HepG2 (cell line): ENCODE measurements at regions of chr11 and their contacts with region 1.

Region 1: GRCh38 chr11:72483412-72484186 is 49.3 kb upstream of the CLPB start:
- DNase-seq: peak; percentile 23
- ATAC-seq: no peak
- H3K4me3 ChIP-seq: no peak overlapping the region
- H3K27ac ChIP-seq: no peak overlapping the region
- H3K4me1 ChIP-seq: peaks cover 10% of the 10 kb centered on the region; the same call in 1 of the 2 replicates
- H3K27me3 ChIP-seq: peaks cover 3 to 5% of the 10 kb centered on the region in 2 experiments; a peak in 2 of 5 replicates
- CTCF ChIP-seq: no peak
- EP300 ChIP-seq: no peak
- POLR2A ChIP-seq: no peak
- RAD21 ChIP-seq: no peak

Region 2: GRCh38 chr11:72468289-72468688 is 15.3 kb before region 1 on chr11:
- CTCF ChIA-PET with region 1: no interaction called
- POLR2A ChIA-PET with region 1: no interaction called
- in situ Hi-C with region 1: no loop called
- intact Hi-C with region 1: no loop called
- DNase-seq: no peak
- ATAC-seq: no peak
- H3K4me3 ChIP-seq: no peak overlapping the region
- H3K27ac ChIP-seq: no peak overlapping the region
- H3K4me1 ChIP-seq: no peaks in the 10 kb centered on the region; the same call in 1 of the 2 replicates
- H3K27me3 ChIP-seq: peaks cover 0 to 33% of the 10 kb centered on the region in 2 experiments; a peak in 3 of 5 replicates
- CTCF ChIP-seq: no peak
- EP300 ChIP-seq: no peak
- POLR2A ChIP-seq: no peak
- RAD21 ChIP-seq: no peak

Region 3: DNA sequence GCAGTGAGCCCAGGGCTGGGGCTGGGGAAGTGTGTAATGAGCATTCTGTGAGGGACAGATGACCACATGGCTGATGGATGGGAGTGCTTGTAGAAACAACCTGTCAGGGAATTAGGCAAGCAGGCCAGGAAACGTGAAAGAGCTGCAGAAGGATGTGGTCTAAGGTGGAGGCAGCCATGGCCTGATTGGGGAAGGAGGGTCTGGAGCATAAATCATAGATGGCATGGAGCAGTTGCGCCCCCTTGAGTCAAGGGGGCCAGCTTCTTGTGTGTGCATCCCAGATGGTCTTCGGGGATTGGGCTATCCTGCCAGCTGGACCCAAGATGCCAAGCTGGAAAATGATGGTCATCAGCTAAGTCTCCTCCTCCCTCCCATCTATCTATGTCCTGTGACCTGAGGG is 70.1 kb after region 1 on chr11:
- CTCF ChIA-PET with region 1: interaction called, 4 read pairs
- POLR2A ChIA-PET with region 1: no interaction called
- in situ Hi-C with region 1: no loop called
- intact Hi-C with region 1: loop called (anchors 5 kb)
- DNase-seq: no peak
- ATAC-seq: peak; percentile 57
- H3K4me3 ChIP-seq: no peak overlapping the region
- H3K27ac ChIP-seq: no peak overlapping the region
- H3K4me1 ChIP-seq: no peaks in the 10 kb centered on the region
- H3K27me3 ChIP-seq: peaks cover 0 to 16% of the 10 kb centered on the region in 2 experiments; a peak in 3 of 5 replicates
- CTCF ChIP-seq: peak; percentile 59
- EP300 ChIP-seq: no peak
- POLR2A ChIP-seq: no peak
- RAD21 ChIP-seq: no peak

Region 4: GRCh38 chr11:72573072-72573854 is 89.7 kb after region 1 on chr11:
- CTCF ChIA-PET with region 1: interaction called, 22 read pairs
- POLR2A ChIA-PET with region 1: no interaction called
- in situ Hi-C with region 1: no loop called
- intact Hi-C with region 1: loop called (anchors 1 kb)
- DNase-seq: peak; percentile 9
- ATAC-seq: peak; percentile 87
- H3K4me3 ChIP-seq: no peak overlapping the region
- H3K27ac ChIP-seq: no peak overlapping the region
- H3K4me1 ChIP-seq: peaks cover 11% of the 10 kb centered on the region; the same call in 1 of the 2 replicates
- H3K27me3 ChIP-seq: peaks cover 2 to 40% of the 10 kb centered on the region in 2 experiments; a peak in 4 of 5 replicates
- CTCF ChIP-seq: peak; percentile 74
- EP300 ChIP-seq: no peak
- POLR2A ChIP-seq: no peak
- RAD21 ChIP-seq: no peak

Region 5: DNA sequence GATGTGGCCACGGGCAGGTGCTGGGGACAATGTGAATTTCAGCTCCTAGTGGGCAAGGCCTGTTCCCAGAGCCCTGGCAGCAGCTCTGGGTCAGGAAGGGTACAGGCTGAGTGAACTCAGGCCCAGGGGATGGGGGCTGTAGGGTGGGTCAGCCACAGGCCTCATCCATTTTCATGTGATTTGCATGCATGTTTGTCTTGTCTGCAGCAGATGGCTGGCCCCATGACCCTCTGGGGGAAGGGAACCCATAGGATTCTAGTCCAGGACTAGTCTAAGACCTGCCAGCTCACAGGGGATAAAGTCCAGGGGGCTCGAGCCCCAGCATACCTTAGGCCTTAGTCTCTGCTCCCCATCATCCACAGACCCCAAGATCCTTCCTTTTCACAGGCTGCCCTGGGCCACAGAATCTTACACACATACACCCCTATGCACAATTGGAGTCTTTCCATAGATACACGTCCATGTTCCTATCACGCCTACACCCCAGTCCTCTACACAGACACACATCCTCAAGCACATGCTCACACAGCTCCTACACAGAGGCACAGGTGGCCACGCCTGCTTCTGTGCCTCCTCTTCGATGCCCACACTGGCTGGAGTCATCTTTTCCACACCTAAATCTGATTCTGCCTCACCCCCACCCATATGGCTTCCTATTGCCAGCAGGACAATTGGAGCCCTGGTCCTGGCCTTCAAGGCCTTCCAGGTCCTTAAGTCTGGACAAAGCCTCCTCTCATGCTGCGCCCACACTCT is 165.0 kb after region 1 on chr11:
- CTCF ChIA-PET with region 1: no interaction called
- POLR2A ChIA-PET with region 1: no interaction called
- in situ Hi-C with region 1: loop called (anchors 5 kb)
- intact Hi-C with region 1: no loop called
- DNase-seq: no peak
- ATAC-seq: no peak
- H3K4me3 ChIP-seq: no peak overlapping the region
- H3K27ac ChIP-seq: no peak overlapping the region
- H3K4me1 ChIP-seq: no peaks in the 10 kb centered on the region
- H3K27me3 ChIP-seq: peaks cover 0 to 12% of the 10 kb centered on the region in 2 experiments; a peak in 3 of 5 replicates
- CTCF ChIP-seq: no peak
- EP300 ChIP-seq: no peak
- POLR2A ChIP-seq: no peak
- RAD21 ChIP-seq: no peak